CD8-positive, alpha-beta T cell (primary cell): ENCODE measurements at regions of chr1 and their contacts with region 1.

Region 1: GRCh38 chr1:205591522-205592351 is 40.1 kb downstream of the ELK4 start:
- DNase-seq: peak; percentile 83 to 95 (median 91)
- ATAC-seq: peak; percentile 88
- H3K4me3 ChIP-seq: peak overlapping the region; percentile 52 to 62
- H3K4me3 Mint-ChIP-seq: peak overlapping the region; percentile 90
- H3K27ac ChIP-seq: peak overlapping the region; percentile 60 to 80
- H3K27ac Mint-ChIP-seq: peak overlapping the region; percentile 95
- H3K4me1 ChIP-seq: peaks cover 23% of the 10 kb centered on the region
- H3K4me1 Mint-ChIP-seq: peaks cover 49% of the 10 kb centered on the region
- H3K27me3 ChIP-seq: no peaks in the 10 kb centered on the region
- H3K27me3 Mint-ChIP-seq: no peaks in the 10 kb centered on the region
- CTCF ChIP-seq: peak; percentile 98

Region 2: DNA sequence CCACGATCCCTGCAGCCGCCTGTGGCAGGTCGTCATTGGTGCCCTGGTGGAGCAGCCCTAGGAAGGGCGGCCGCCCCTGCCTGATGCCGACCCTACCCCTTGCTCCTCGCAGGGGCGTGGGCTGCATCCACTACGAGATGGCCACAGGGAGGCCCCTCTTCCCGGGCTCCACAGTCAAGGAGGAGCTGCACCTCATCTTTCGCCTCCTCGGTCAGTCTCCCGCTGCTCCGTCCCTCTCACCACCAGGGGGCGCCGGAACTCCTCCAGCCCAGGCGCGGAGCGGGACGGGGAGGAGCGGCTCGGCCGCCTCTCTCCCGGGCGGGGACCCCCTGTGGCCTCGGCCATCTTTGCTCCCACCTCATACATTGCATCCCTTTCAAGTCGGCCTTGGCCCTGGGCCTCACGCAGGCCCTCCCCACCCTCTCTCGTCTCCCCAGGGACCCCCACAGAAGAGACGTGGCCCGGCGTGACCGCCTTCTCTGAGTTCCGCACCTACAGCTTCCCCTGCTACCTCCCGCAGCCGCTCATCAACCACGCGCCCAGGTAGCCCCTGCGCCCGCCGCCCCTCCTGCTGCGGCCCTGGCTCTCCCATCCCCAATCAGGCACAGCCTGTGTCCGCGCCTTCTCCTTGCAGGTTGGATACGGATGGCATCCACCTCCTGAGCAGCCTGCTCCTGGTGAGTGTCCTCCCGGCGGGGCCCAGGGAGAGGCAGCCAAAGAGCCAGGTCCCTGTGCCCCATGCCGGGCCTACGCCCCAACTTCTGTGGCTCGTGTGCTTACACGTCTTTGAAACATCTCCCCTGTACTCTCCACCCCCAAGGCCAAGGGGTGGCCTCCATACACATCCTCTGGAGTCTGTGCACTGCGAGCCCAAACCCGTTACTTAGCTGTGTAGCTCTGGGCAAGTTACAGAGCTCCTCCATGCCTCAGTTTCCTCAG is 62.6 kb before region 1 on chr1:
- CTCF ChIA-PET with region 1: interaction called, 20 read pairs
- POLR2A ChIA-PET with region 1: no interaction called
- intact Hi-C with region 1: loop called (anchors 1 kb)
- DNase-seq: peak; percentile 68 to 92 (median 80)
- ATAC-seq: peak; percentile 90
- H3K4me3 ChIP-seq: peak overlapping the region in 1 of 2 experiments; percentile 26
- H3K4me3 Mint-ChIP-seq: peak overlapping the region; percentile 58
- H3K27ac ChIP-seq: no peak overlapping the region
- H3K27ac Mint-ChIP-seq: no peak overlapping the region
- H3K4me1 ChIP-seq: no peaks in the 10 kb centered on the region
- H3K4me1 Mint-ChIP-seq: peaks cover 5% of the 10 kb centered on the region
- H3K27me3 ChIP-seq: no peaks in the 10 kb centered on the region
- H3K27me3 Mint-ChIP-seq: no peaks in the 10 kb centered on the region
- CTCF ChIP-seq: peak; percentile 90

Region 3: GRCh38 chr1:205610036-205610435 is 18.3 kb after region 1 on chr1:
- CTCF ChIA-PET with region 1: interaction called, 15 read pairs
- POLR2A ChIA-PET with region 1: interaction called, 3 read pairs
- intact Hi-C with region 1: loop called in 1 of 2 experiments (anchors 2 kb)
- DNase-seq: no peak
- ATAC-seq: no peak
- H3K4me3 ChIP-seq: no peak overlapping the region
- H3K4me3 Mint-ChIP-seq: no peak overlapping the region
- H3K27ac ChIP-seq: no peak overlapping the region
- H3K27ac Mint-ChIP-seq: peak overlapping the region; percentile 23
- H3K4me1 ChIP-seq: peaks cover 28% of the 10 kb centered on the region
- H3K4me1 Mint-ChIP-seq: peaks cover 48% of the 10 kb centered on the region
- H3K27me3 ChIP-seq: no peaks in the 10 kb centered on the region
- H3K27me3 Mint-ChIP-seq: no peaks in the 10 kb centered on the region
- CTCF ChIP-seq: no peak

Region 4: GRCh38 chr1:205626216-205626615 is 34.5 kb after region 1 on chr1:
- CTCF ChIA-PET with region 1: interaction called, 218 read pairs
- POLR2A ChIA-PET with region 1: interaction called, 175 read pairs
- intact Hi-C with region 1: no loop called
- DNase-seq: peak in 1 of 9 experiments; percentile 12
- ATAC-seq: no peak
- H3K4me3 ChIP-seq: no peak overlapping the region
- H3K4me3 Mint-ChIP-seq: peak overlapping the region; percentile 3
- H3K27ac ChIP-seq: no peak overlapping the region
- H3K27ac Mint-ChIP-seq: peak overlapping the region; percentile 80
- H3K4me1 ChIP-seq: peaks cover 41% of the 10 kb centered on the region
- H3K4me1 Mint-ChIP-seq: peaks cover 65% of the 10 kb centered on the region
- H3K27me3 ChIP-seq: no peaks in the 10 kb centered on the region
- H3K27me3 Mint-ChIP-seq: no peaks in the 10 kb centered on the region
- CTCF ChIP-seq: no peak

Region 5: DNA sequence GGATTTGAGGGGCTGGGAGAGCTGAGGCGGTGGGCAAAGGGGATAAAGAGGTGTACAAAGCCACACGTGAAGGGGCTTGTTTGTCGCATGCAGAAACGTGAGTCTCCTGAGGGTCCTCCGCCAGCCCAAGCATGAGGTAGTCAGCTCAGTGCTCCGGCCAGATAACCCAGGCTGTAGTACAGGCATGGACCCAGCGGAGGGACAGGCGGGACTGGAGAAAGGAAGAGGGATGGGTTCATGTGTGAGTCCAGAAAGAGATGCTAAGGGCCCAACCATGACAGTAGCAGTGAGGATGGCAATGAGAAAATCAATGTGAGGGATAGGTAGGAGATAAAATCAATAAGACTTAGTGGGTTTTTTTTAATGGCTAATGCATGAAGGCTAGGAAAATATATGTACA is 53.8 kb after region 1 on chr1:
- CTCF ChIA-PET with region 1: interaction called, 16 read pairs
- POLR2A ChIA-PET with region 1: interaction called, 3 read pairs
- intact Hi-C with region 1: no loop called
- DNase-seq: no peak
- ATAC-seq: no peak
- H3K4me3 ChIP-seq: no peak overlapping the region
- H3K4me3 Mint-ChIP-seq: no peak overlapping the region
- H3K27ac ChIP-seq: no peak overlapping the region
- H3K27ac Mint-ChIP-seq: no peak overlapping the region
- H3K4me1 ChIP-seq: no peaks in the 10 kb centered on the region
- H3K4me1 Mint-ChIP-seq: no peaks in the 10 kb centered on the region
- H3K27me3 ChIP-seq: no peaks in the 10 kb centered on the region
- H3K27me3 Mint-ChIP-seq: peaks cover 8% of the 10 kb centered on the region
- CTCF ChIP-seq: no peak

Region 6: GRCh38 chr1:205711104-205712020 is 119.6 kb after region 1 on chr1:
- CTCF ChIA-PET with region 1: interaction called, 69 read pairs
- POLR2A ChIA-PET with region 1: interaction called, 3 read pairs
- intact Hi-C with region 1: loop called (anchors 1 to 2 kb)
- DNase-seq: peak in 8 of 9 experiments; percentile 34 to 86 (median 66)
- ATAC-seq: peak; percentile 95
- H3K4me3 ChIP-seq: no peak overlapping the region
- H3K4me3 Mint-ChIP-seq: no peak overlapping the region
- H3K27ac ChIP-seq: no peak overlapping the region
- H3K27ac Mint-ChIP-seq: no peak overlapping the region
- H3K4me1 ChIP-seq: no peaks in the 10 kb centered on the region
- H3K4me1 Mint-ChIP-seq: peaks cover 13% of the 10 kb centered on the region
- H3K27me3 ChIP-seq: no peaks in the 10 kb centered on the region
- H3K27me3 Mint-ChIP-seq: no peaks in the 10 kb centered on the region
- CTCF ChIP-seq: peak; percentile 90

Region 7: GRCh38 chr1:205925730-205926129 is 334.0 kb after region 1 on chr1:
- CTCF ChIA-PET with region 1: no interaction called
- POLR2A ChIA-PET with region 1: no interaction called
- intact Hi-C with region 1: no loop called
- DNase-seq: no peak
- ATAC-seq: no peak
- H3K4me3 ChIP-seq: no peak overlapping the region
- H3K4me3 Mint-ChIP-seq: no peak overlapping the region
- H3K27ac ChIP-seq: no peak overlapping the region
- H3K27ac Mint-ChIP-seq: no peak overlapping the region
- H3K4me1 ChIP-seq: no peaks in the 10 kb centered on the region
- H3K4me1 Mint-ChIP-seq: no peaks in the 10 kb centered on the region
- H3K27me3 ChIP-seq: no peaks in the 10 kb centered on the region
- H3K27me3 Mint-ChIP-seq: peaks cover 5% of the 10 kb centered on the region
- CTCF ChIP-seq: no peak

Region 8: DNA sequence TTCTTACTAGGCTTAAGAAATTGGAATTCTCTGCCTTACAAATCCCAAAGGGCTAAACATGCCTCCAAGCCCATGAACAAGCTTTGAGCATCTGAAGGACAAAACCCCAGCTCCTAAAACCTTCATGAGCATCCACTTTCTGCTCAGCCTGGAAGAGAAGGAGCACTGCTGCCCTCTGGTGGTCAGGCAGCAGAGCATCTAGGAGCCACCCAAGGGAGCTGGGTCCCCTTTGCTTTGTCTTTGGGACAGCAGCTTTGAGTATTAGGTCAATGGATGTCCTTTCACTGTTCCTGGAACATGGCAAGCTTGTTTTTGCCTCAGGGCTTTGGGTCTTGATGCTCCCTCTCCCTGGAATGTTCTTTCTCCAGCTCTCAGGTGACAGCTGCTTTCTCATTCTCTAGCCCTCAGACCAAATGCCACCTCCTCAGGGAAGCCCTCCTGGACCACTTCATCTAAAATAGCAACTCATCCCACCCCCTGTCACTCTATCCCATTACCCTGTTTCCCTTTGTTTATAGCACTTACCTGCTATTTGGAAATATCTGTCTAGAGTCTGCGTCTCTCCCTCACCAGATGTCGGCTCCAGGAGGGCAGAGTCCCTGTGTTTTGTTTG is 385.8 kb after region 1 on chr1:
- CTCF ChIA-PET with region 1: interaction called, 15 read pairs
- POLR2A ChIA-PET with region 1: no interaction called
- intact Hi-C with region 1: loop called (anchors 5 to 10 kb)
- DNase-seq: peak; percentile 47 to 85 (median 78)
- ATAC-seq: peak; percentile 68
- H3K4me3 ChIP-seq: no peak overlapping the region
- H3K4me3 Mint-ChIP-seq: no peak overlapping the region
- H3K27ac ChIP-seq: no peak overlapping the region
- H3K27ac Mint-ChIP-seq: no peak overlapping the region
- H3K4me1 ChIP-seq: no peaks in the 10 kb centered on the region
- H3K4me1 Mint-ChIP-seq: no peaks in the 10 kb centered on the region
- H3K27me3 ChIP-seq: peaks cover 0 to 6% of the 10 kb centered on the region in 2 experiments
- H3K27me3 Mint-ChIP-seq: no peaks in the 10 kb centered on the region
- CTCF ChIP-seq: peak; percentile 87